ENCODE measurements at regions of chr11 and their contacts with region 1.

Region 1: DNA sequence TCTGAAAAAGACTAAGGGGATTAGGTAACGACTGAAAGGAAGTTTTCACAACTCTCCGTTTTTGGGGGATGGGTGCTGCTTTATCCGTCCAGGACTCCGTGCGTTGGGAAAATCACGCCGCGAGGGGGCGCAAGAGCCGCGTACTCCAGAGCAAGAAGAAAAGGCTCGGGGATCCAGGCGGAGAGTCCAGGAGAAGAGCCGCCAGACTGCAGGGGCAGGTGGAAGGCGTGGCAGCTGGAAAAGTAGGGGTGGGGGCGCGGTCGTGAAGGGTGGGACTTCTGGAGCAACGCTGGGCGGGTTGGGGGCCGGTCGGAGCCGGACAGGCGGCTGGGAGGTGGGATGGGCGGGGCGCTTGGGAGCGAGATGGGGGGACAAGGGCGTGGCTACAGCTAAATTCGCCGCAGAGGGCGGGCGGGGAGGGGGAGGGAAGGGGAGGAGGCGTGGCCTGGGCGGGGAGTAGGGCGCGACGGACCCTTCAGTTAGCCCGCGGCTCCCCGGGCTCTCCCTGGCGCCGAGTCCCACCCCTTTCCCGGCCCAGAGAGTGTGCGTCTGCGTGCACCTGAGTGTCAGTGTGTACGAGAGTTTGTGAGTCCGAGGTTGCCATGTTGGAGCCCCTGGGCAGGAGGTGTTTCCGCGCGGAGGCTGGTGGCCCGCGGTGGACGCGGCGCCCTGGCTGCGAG is 613 bp upstream of the ARHGEF17 start:
- DNase-seq: peak; percentile 100
- H3K4me3 ChIP-seq: peak overlapping the region; percentile 67 to 82 (median 70)
- H3K27ac ChIP-seq: peak overlapping the region; percentile 94 to 100 (median 97)
- H3K4me1 ChIP-seq: peaks cover 33 to 58% (median 44%) of the 10 kb centered on the region in 4 donors
- H3K27me3 ChIP-seq: no peaks in the 10 kb centered on the region
- CTCF ChIP-seq: peak; percentile 88 to 93 (median 91)
- EP300 ChIP-seq: no peak
- POLR2A ChIP-seq: no peak

Region 2: GRCh38 chr11:73198677-73199076 is 108.8 kb before region 1 on chr11:
- intact Hi-C with region 1: no loop called
- DNase-seq: no peak
- H3K4me3 ChIP-seq: no peak overlapping the region
- H3K27ac ChIP-seq: no peak overlapping the region
- H3K4me1 ChIP-seq: peaks cover 0 to 6% (median 0%) of the 10 kb centered on the region in 4 donors
- H3K27me3 ChIP-seq: no peaks in the 10 kb centered on the region
- CTCF ChIP-seq: no peak
- EP300 ChIP-seq: no peak
- POLR2A ChIP-seq: no peak

Region 3: GRCh38 chr11:73335204-73335923 is 27.9 kb after region 1 on chr11:
- intact Hi-C with region 1: loop called (anchors 1 kb)
- DNase-seq: no peak
- H3K4me3 ChIP-seq: peak overlapping the region in 1 of 4 donors; percentile 3
- H3K27ac ChIP-seq: peak overlapping the region; percentile 77 to 90 (median 82)
- H3K4me1 ChIP-seq: peaks cover 70 to 100% (median 100%) of the 10 kb centered on the region in 4 donors
- H3K27me3 ChIP-seq: no peaks in the 10 kb centered on the region
- CTCF ChIP-seq: peak in 2 of 3 experiments; percentile 99 to 100
- EP300 ChIP-seq: no peak
- POLR2A ChIP-seq: no peak

Measured in esophagus muscularis mucosa (tissue), 4 donors.